Left cardiac atrium (tissue), 4 donors: ENCODE measurements at regions of chr19 and their contacts with region 1.

Region 1: GRCh38 chr19:15264061-15264932 is 32.0 kb upstream of the EPHX3 start:
- DNase-seq: peak; percentile 81
- ATAC-seq: peak; percentile 23 to 46

Region 2: DNA sequence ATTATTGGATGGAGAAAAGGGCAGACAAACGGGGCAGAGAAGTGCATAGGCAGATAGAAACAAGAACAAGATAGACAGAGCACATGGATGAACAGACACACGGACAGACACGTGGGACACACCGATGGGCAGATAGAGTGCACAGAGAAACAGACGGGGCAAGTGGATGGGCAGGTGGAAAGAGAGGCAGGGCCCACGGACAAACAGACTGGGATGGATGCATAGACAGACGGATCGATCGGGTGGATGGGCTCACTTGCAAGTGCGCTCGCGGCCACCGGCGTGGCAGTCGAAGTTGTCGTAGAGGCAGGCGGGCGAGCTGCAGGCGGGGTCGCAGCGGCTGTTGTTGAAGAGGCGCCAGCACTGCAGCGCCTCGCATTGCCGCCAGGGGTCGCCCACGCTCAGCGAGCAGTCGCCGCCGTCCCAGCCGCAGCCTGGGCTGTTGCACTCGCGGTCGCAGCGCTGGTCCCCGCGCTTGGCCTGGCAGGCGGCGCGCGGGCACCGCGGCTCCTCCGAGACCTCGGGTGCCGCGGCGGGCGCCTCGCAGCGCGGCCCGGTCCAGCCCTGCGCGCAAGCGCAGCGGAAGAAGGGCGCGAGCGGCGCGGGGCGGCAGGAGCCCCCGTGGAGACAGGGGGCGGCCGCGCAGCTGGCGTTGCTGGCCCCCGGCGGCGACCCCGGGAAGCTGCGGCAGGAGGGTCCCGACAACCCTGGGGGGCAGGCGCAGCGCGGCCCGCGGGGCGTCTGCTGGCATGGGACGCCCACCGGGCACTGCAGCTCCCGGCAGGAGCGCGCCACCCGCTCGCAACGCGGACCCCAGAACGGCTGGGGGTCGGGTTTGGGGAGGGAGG is 86.8 kb before region 1 on chr19:
- intact Hi-C with region 1: loop called in 1 of 2 experiments (anchors 5 kb)
- DNase-seq: peak; percentile 85
- ATAC-seq: peak; percentile 83 to 90

Region 3: GRCh38 chr19:15241259-15241910 is 22.9 kb before region 1 on chr19:
- intact Hi-C with region 1: no loop called
- DNase-seq: no peak
- ATAC-seq: no peak

Region 4: DNA sequence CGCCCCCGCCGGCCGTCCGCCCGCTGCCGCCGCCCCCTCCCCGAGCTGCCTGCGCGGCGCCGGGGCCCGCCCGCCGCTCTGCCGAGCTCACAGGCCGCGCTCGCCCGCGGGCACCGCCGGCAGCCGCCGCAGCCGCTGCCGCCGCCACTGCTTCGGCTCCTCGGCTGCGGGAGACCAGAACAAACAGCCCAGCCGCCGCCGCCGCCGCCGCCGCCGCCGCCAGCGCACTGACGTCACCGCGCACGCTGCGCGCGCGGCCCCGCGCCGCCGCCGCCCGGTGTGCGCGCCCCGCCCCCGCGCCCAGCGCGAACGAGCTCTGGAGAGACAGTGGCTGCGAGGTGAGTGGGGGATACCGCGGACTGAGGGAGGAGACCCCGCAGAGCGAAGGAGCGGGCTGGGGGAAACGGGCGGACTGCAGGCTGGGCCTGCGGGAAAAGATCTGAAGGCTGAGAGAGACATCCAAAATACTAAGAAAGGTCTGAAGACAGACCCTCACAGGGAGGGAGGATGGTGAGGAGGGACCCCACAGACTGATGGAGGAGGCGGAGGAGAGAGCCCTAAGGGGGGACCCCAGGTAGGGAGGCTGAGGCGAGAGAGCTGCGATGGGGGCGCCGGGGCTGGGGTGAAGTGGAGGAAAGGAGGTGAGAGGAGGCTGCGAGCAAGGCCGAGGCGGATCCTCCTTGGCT is 68.2 kb after region 1 on chr19 and contains the start of gene BRD4:
- intact Hi-C with region 1: loop called in 1 of 2 experiments (anchors 5 kb)
- DNase-seq: peak; percentile 81
- ATAC-seq: peak; percentile 74 to 84
- total RNA-seq, gene BRD4: 43.9 to 63.3 TPM

Region 5: DNA sequence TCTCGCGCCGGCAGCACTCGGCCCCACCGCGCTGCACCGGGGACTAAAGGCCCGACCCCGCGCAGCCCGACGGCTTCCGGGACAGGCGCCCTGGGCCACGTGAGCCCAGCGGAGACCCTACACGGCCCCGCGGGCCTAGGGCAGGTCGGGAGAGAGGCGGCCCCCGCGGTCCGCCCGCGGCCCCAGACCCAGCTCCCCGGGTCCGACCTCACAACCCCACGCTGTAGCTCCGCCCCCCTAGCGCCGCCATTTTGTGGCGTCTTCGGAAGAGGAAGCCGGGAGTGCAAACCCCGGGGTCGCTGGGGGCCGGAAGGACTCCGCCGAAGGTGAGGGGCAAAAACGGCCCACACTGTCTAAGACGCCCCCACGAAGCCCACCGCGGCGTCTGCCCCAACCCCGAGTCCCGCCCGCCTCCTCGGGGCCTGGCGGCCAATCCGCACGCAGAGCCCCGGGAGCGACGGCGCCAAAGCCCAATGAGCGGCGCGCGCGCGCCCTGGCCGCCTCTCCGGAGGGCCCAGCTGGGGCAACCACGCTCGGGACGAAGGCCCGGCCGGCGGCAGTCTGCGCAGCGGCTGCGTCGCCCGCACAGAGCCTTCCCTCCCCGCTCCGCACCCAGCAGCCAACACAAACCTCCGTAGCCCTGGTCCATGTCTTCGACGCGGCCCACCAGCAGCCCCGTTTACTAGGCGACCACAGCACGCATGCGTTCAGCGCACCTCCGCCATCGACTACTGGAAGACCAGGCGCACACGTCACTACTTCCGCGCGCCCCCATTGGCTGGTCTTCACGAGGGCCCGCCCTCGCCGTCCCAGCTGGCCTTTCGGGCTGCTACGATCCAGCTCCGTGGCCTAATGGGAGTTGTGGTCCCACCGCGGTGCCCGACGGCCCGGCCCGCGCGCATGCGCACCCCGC is 115.0 kb after region 1 on chr19 and contains the start of gene AKAP8:
- intact Hi-C with region 1: loop called (anchors 5 to 10 kb)
- DNase-seq: peak; percentile 99
- ATAC-seq: peak; percentile 96 to 97
- total RNA-seq, gene AKAP8: 16.0 to 30.5 TPM

Region 6: DNA sequence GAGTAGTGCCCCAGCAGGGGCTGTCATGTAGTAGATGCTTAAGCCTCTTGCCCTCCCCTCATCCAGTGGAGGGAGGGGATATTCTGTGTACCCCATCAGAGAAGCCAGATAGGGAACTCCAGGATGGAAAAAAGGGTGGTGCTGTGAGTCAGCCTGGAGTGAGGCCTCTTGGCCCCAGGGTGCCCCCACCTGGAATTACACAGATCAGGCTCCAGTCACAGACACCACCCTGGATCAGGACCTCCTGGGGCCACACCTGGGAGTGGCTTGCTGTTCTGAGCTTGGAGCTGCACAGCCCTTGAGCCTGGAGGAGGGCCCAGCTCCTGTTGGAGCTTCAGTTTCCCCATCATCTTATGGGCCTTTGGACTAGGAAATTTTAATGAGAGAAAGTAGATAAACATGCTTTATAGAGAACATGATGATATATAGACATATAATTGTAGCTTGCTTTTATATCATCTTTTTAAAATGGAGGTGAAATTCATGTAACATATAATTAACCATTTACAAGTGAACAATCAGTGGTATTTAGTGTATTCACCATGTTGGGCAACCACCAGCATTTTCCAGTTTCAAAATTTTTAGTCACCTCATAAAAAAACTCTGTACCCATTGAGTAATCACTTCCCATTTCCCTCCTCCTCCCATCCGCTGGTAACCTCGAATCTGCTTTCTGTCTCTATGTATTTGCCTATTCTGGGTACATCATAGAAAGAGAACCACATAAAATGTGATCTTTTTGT is 268.7 kb after region 1 on chr19:
- intact Hi-C with region 1: no loop called
- DNase-seq: no peak
- ATAC-seq: no peak